MCF 10A (cell line): ENCODE measurements at regions of chr19 and their contacts with region 1.

Region 1: DNA sequence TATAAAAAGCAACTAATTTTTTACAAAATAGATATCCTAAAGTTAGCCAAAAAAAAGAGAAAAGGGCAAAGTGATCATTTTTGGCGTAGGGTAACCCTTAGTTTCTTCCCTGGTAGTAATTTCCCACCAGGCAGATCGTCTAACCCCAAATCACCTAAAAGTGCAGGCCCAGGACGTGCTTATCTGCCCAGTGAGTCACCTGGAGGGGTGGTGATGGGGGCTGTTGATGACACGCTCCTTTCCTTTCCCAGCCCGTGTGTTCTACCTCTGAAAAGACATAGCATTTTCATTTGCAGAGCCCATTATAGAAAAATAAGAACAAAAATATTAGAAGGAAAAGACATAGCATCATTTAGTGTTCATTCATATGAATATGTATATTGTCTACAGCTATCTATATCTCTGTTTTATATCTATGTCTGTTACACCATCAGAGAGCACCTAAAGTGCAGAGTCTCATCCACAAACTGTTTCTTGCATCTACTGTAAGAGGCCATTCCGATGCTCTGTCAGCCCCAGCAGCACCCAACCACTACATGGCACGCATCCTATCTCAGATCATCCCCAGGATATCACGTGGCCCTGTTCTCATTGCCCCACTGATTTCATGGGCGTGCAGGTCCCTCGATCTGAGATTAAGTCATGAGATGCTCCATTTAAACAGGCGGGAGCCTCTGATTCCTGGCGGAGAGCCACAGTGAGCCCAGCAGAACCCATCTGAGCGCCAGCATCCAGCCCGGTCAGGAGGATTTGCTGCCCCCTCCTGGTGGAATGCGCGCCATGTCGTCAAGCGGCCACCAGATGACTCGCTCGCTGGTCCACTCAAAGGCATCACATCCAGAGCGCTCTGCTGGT is 8.5 kb upstream of the LILRB3 start:
- DNase-seq: peak; percentile 89
- H3K4me3 Mint-ChIP-seq: no peak overlapping the region
- H3K27ac Mint-ChIP-seq: no peak overlapping the region
- H3K4me1 Mint-ChIP-seq: no peaks in the 10 kb centered on the region
- H3K27me3 Mint-ChIP-seq: peaks cover 28% of the 10 kb centered on the region
- CTCF ChIP-seq: peak; percentile 97

Region 2: GRCh38 chr19:54168174-54168917 is 63.0 kb before region 1 on chr19:
- CTCF ChIA-PET with region 1: interaction called, 6 read pairs
- POLR2A ChIA-PET with region 1: no interaction called
- intact Hi-C with region 1: loop called (anchors 1 kb)
- DNase-seq: peak; percentile 86
- H3K4me3 Mint-ChIP-seq: no peak overlapping the region
- H3K27ac Mint-ChIP-seq: no peak overlapping the region
- H3K4me1 Mint-ChIP-seq: peaks cover 6% of the 10 kb centered on the region
- H3K27me3 Mint-ChIP-seq: no peaks in the 10 kb centered on the region
- CTCF ChIP-seq: peak; percentile 82

Region 3: GRCh38 chr19:54266133-54266532 is 34.8 kb after region 1 on chr19:
- CTCF ChIA-PET with region 1: interaction called, 10 read pairs
- POLR2A ChIA-PET with region 1: no interaction called
- intact Hi-C with region 1: no loop called
- DNase-seq: peak; percentile 82
- H3K4me3 Mint-ChIP-seq: no peak overlapping the region
- H3K27ac Mint-ChIP-seq: no peak overlapping the region
- H3K4me1 Mint-ChIP-seq: no peaks in the 10 kb centered on the region
- H3K27me3 Mint-ChIP-seq: peaks cover 56% of the 10 kb centered on the region
- CTCF ChIP-seq: peak; percentile 58